WTC11 (cell line): ENCODE measurements at regions of chr2 and their contacts with region 1.

Region 1: GRCh38 chr2:162333968-162334367 is 10.0 kb upstream of the GCA start:
- DNase-seq: peak; percentile 42
- ATAC-seq: peak; percentile 90
- H3K4me3 Mint-ChIP-seq: no peak overlapping the region
- H3K27ac Mint-ChIP-seq: no peak overlapping the region
- H3K4me1 Mint-ChIP-seq: no peaks in the 10 kb centered on the region
- H3K27me3 Mint-ChIP-seq: no peaks in the 10 kb centered on the region
- CTCF ChIP-seq: 0 out of 2 replicates have a peak, but pooled peaks have one; percentile 18

Region 2: GRCh38 chr2:162318328-162319180 is 15.4 kb before region 1 on chr2 and contains the start of gene IFIH1:
- CTCF ChIA-PET with region 1: interaction called, 20 read pairs
- POLR2A ChIA-PET with region 1: no interaction called
- DNase-seq: peak; percentile 70
- ATAC-seq: peak; percentile 87
- H3K4me3 Mint-ChIP-seq: peak within 1 kb of the TSS; percentile 82
- H3K27ac Mint-ChIP-seq: peak within 1 kb of the TSS; percentile 50; the same call in 1 of the 2 replicates
- H3K4me1 Mint-ChIP-seq: peaks cover 23% of the 10 kb centered on the region
- H3K27me3 Mint-ChIP-seq: peaks cover 21% of the 10 kb centered on the region
- CTCF ChIP-seq: no peak
- total RNA-seq, gene IFIH1: 1.3 to 2.3 TPM (median 2.1 TPM) in 3 replicates

Region 3: DNA sequence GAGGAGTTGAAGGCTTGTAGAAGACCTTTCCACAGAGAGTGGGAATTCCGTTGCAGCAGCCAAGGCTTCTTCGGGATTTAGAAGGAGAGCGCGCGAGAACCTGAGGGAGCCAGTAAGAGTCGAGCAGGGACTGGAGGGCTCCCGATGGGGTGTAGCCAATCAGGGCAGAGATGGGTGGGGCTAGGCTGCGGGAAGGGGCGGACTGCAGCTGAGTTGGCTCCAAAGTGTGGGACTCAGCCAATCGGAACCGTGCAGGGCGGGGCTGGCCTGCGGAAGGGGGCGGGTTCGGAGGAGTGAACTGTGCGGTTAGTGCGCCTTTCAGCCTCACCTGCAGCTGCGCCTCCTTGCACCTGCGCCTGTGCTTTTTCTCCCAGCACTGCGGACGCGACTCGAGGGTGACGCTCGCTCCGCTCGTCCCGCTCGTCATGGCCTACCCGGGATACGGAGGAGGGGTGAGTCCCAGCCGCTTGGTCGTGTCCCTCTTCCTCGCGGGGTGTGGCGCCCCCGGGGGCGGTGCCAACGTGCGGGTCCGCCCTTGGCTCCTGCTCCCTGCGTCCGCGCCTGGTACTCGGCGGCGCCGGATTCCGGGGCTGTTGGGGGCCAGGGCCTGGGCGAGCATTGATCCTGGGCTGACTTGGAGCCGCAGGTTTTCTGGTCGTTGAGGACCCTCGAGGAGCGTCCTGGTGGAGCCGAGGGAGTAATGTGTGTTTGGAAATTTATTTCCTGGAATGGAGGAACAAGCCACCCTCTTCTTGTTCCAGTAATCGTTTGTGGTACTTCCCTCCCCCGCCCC is 10.1 kb after region 1 on chr2 and contains the start of gene GCA:
- CTCF ChIA-PET with region 1: interaction called, 12 read pairs
- POLR2A ChIA-PET with region 1: no interaction called
- DNase-seq: peak; percentile 99
- ATAC-seq: peak; percentile 100
- H3K4me3 Mint-ChIP-seq: peak within 1 kb of the TSS; percentile 97
- H3K27ac Mint-ChIP-seq: peak within 1 kb of the TSS; percentile 97
- H3K4me1 Mint-ChIP-seq: peaks cover 9% of the 10 kb centered on the region
- H3K27me3 Mint-ChIP-seq: peaks cover 19% of the 10 kb centered on the region
- CTCF ChIP-seq: no peak
- total RNA-seq, gene GCA: 42.1 to 46.2 TPM (median 44.5 TPM) in 3 replicates

Region 4: DNA sequence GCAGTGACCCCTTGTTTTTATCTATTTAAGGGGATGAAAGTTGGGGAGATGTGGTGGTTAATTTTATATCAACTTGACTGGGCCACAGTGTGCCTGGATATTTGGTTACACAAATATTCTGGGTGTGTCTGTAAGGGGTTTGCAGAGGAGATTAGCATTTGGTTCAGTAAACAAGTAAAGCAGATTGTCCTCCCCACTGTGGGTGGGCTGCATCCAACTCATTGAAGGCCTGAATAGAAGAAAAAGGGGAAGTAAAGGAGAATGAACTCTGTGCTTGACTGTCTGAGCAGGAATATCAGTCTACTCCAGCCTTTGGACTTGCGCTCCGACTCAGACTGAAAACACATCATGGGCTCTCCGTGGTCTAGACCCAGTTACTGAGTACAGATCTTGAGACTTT is 90.8 kb after region 1 on chr2:
- CTCF ChIA-PET with region 1: no interaction called
- POLR2A ChIA-PET with region 1: no interaction called
- DNase-seq: no peak
- ATAC-seq: peak; percentile 60
- H3K4me3 Mint-ChIP-seq: no peak overlapping the region
- H3K27ac Mint-ChIP-seq: peak overlapping the region; percentile 31; the same call in 1 of the 2 replicates
- H3K4me1 Mint-ChIP-seq: peaks cover 24% of the 10 kb centered on the region
- H3K27me3 Mint-ChIP-seq: no peaks in the 10 kb centered on the region
- CTCF ChIP-seq: no peak